Activated CD4-positive, alpha-beta memory T cell treated with anti-CD3 and anti-CD28 coated beads, Interleukin-2, amount 10 ng/mL, durations not matched to agents 7 days and 5 days (primary cell): ENCODE measurements at regions of chr11 and their contacts with region 1.

Region 1: GRCh38 chr11:128522055-128522942 is 65.1 kb downstream of the ETS1 start:
- DNase-seq: peak; percentile 94
- H3K4me3 Mint-ChIP-seq: peak overlapping the region; percentile 97
- H3K27ac Mint-ChIP-seq: peak overlapping the region; percentile 88
- H3K4me1 Mint-ChIP-seq: peaks cover 44% of the 10 kb centered on the region
- H3K27me3 Mint-ChIP-seq: no peaks in the 10 kb centered on the region

Region 2: DNA sequence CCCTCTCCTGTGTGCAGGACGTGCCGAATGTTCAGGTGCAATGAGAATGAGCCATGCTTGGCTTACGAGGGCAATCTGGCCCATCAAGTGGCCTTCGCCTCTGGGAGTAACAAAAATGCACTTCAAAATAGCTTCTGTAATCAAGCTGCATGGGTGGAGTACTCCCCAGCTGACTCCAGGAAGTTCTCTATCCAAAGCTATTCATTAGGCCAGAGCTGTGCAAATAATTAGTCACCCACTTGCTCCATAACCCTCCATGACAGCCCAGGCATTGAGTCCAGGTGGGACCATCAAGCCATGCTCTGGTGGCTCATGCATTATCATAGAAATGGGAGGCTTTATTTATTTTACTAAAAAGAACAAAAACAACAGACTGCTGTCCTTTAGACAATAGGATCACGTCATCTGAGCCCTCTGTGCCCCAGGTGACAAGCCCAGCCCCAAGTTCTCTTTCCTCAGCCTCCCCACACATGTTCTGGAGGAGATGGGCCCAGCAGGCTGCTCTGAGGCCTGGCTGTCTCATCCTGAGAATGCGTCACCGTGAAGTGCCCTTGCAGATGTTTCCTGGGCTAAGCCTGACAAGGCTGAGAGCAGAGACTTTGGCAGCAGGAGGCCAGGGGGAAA is 179.7 kb before region 1 on chr11:
- CTCF ChIA-PET with region 1: interaction called, 3 read pairs
- POLR2A ChIA-PET with region 1: interaction called, 13 read pairs
- DNase-seq: peak; percentile 79
- H3K4me3 Mint-ChIP-seq: peak overlapping the region; percentile 65
- H3K27ac Mint-ChIP-seq: peak overlapping the region; percentile 96
- H3K4me1 Mint-ChIP-seq: peaks cover 79% of the 10 kb centered on the region
- H3K27me3 Mint-ChIP-seq: no peaks in the 10 kb centered on the region

Region 3: DNA sequence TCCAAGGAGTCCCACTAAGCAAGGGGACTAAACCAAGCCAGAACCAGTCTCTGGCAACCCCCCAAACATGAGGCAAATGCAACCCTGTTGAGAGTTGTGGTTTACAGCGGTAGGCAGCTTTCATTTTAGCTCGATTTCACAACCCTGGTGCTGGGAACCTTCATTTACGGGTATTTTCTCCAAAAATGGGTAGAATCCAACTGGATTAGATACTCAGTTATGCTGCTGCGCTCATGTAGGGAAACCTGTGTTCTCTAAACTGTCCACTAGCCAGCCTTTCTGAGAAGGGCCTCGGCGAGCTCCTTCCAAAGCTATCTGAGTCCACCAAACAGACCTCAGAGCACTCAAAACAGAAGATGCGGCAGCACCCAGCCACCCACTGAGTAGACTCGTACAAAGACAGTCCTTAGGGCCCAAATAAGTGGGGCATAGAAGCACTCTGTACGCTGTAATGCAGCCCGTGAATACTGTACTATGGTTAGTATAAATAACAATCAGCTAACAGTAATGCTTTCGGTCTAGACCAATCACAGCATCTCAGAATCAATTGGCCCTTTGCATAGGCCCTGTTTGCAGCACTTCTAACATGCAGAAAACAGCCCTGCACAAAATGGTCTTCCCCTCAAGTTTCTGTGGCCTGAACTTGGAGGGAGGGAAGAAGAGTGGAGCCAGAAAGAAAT is 39.6 kb before region 1 on chr11:
- CTCF ChIA-PET with region 1: interaction called, 63 read pairs
- POLR2A ChIA-PET with region 1: interaction called, 1,025 read pairs
- DNase-seq: peak; percentile 59
- H3K4me3 Mint-ChIP-seq: peak overlapping the region; percentile 67
- H3K27ac Mint-ChIP-seq: peak overlapping the region; percentile 92
- H3K4me1 Mint-ChIP-seq: peaks cover 95% of the 10 kb centered on the region
- H3K27me3 Mint-ChIP-seq: no peaks in the 10 kb centered on the region

Region 4: DNA sequence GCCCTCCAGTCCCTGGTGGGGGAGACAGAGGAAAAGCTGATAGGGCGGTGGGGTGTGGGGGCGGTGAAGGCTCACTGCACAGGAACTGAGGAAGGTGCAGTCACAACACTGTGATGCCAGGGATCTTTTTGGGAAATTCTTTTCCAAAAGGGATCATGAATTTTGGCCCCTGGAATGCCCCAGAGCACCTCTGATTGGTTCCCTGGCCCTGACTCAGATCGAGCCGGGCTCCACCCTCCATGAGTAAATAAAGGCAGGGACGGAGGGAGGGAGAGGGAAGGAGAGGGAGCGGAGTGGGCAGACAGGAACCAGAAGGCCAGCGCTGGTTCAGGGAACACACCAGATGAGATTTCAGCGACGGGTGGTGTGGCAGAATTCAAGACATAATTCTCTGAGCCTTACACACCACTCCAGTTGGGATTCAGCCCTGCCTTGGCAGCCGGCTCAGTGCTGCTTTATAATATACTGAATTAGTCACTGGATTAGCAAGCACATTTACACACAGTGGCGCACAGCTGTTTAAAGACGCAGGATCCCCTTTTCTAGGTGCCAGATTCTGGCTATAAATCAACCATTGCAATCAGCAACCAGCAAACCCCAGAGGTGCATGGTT is 15.2 kb before region 1 on chr11:
- CTCF ChIA-PET with region 1: interaction called, 29 read pairs
- POLR2A ChIA-PET with region 1: interaction called, 1,016 read pairs
- DNase-seq: no peak
- H3K4me3 Mint-ChIP-seq: peak overlapping the region; percentile 69
- H3K27ac Mint-ChIP-seq: peak overlapping the region; percentile 71
- H3K4me1 Mint-ChIP-seq: peaks cover 99% of the 10 kb centered on the region
- H3K27me3 Mint-ChIP-seq: no peaks in the 10 kb centered on the region

Region 5: GRCh38 chr11:128624269-128625175 is 102.2 kb after region 1 on chr11:
- CTCF ChIA-PET with region 1: interaction called, 110 read pairs
- POLR2A ChIA-PET with region 1: interaction called, 525 read pairs
- DNase-seq: peak; percentile 75
- H3K4me3 Mint-ChIP-seq: peak overlapping the region; percentile 55
- H3K27ac Mint-ChIP-seq: peak overlapping the region; percentile 93
- H3K4me1 Mint-ChIP-seq: peaks cover 84% of the 10 kb centered on the region
- H3K27me3 Mint-ChIP-seq: no peaks in the 10 kb centered on the region

Region 6: GRCh38 chr11:128725630-128726319 is 203.5 kb after region 1 on chr11:
- CTCF ChIA-PET with region 1: no interaction called
- POLR2A ChIA-PET with region 1: interaction called, 12 read pairs
- DNase-seq: peak; percentile 68
- H3K4me3 Mint-ChIP-seq: peak overlapping the region; percentile 67
- H3K27ac Mint-ChIP-seq: peak overlapping the region; percentile 95
- H3K4me1 Mint-ChIP-seq: peaks cover 98% of the 10 kb centered on the region
- H3K27me3 Mint-ChIP-seq: no peaks in the 10 kb centered on the region